ENCODE measurements at regions of chr19 and their contacts with region 1.

Region 1: GRCh38 chr19:3185482-3186376 is at the start of gene NCLN:
- DNase-seq: peak; percentile 78 to 96
- H3K4me3 ChIP-seq: peak within 1 kb of the TSS; percentile 89 to 98
- H3K27ac ChIP-seq: peak within 1 kb of the TSS; percentile 60 to 75
- H3K4me1 ChIP-seq: peaks cover 13 to 16% of the 10 kb centered on the region in 2 donors
- H3K27me3 ChIP-seq: no peaks in the 10 kb centered on the region
- CTCF ChIP-seq: no peak
- total RNA-seq, gene NCLN: 118 TPM

Region 2: GRCh38 chr19:2944775-2945574 is 240.8 kb before region 1 on chr19 and contains the start of gene ZNF77:
- intact Hi-C with region 1: loop called (anchors 1 kb)
- DNase-seq: peak; percentile 95 to 99
- H3K4me3 ChIP-seq: peak within 1 kb of the TSS; percentile 97
- H3K27ac ChIP-seq: peak within 1 kb of the TSS; percentile 80 to 91
- H3K4me1 ChIP-seq: peaks cover 6 to 19% of the 10 kb centered on the region in 2 donors
- H3K27me3 ChIP-seq: no peaks in the 10 kb centered on the region
- CTCF ChIP-seq: peak in 2 of 3 experiments; percentile 9 to 11
- total RNA-seq, gene ZNF77: 3.0 TPM